Esophagus muscularis mucosa (tissue), 4 donors: ENCODE measurements at regions of chr18 and their contacts with region 1.

Region 1: GRCh38 chr18:52888014-52888413 is 548.0 kb downstream of the DCC start:
- DNase-seq: no peak
- H3K4me3 ChIP-seq: no peak overlapping the region
- H3K27ac ChIP-seq: no peak overlapping the region
- H3K4me1 ChIP-seq: no peaks in the 10 kb centered on the region
- H3K27me3 ChIP-seq: no peaks in the 10 kb centered on the region
- CTCF ChIP-seq: no peak
- EP300 ChIP-seq: no peak
- POLR2A ChIP-seq: no peak

Region 2: GRCh38 chr18:52615943-52616342 is 272.1 kb before region 1 on chr18:
- intact Hi-C with region 1: no loop called
- DNase-seq: no peak
- H3K4me3 ChIP-seq: no peak overlapping the region
- H3K27ac ChIP-seq: no peak overlapping the region
- H3K4me1 ChIP-seq: no peaks in the 10 kb centered on the region
- H3K27me3 ChIP-seq: no peaks in the 10 kb centered on the region
- CTCF ChIP-seq: no peak
- EP300 ChIP-seq: no peak
- POLR2A ChIP-seq: no peak

Region 3: GRCh38 chr18:52829876-52830405 is 58.1 kb before region 1 on chr18:
- intact Hi-C with region 1: loop called (anchors 5 kb)
- DNase-seq: no peak
- H3K4me3 ChIP-seq: no peak overlapping the region
- H3K27ac ChIP-seq: no peak overlapping the region
- H3K4me1 ChIP-seq: peaks cover 0 to 8% (median 1%) of the 10 kb centered on the region in 4 donors
- H3K27me3 ChIP-seq: no peaks in the 10 kb centered on the region
- CTCF ChIP-seq: no peak
- EP300 ChIP-seq: no peak
- POLR2A ChIP-seq: no peak

Region 4: DNA sequence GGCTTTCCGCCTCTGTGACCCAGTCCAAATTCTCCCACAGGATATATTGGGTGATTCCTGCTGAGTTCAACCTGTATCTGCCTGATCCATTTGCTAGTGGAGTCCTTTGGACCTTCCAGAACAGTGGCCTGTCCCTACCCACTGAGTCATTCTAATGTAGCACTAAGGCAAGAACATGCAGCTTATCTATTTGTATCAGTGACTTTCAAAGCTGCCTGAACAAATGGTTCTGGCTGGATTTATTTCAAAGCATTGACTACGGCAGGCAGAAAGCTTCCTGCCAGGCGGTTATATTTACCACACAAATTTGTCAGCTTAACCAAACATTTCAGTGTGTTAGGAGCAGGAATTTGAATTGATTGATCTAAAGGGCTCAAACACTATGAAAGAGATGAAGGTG is 65.4 kb after region 1 on chr18:
- intact Hi-C with region 1: no loop called
- DNase-seq: no peak
- H3K4me3 ChIP-seq: no peak overlapping the region
- H3K27ac ChIP-seq: no peak overlapping the region
- H3K4me1 ChIP-seq: no peaks in the 10 kb centered on the region
- H3K27me3 ChIP-seq: no peaks in the 10 kb centered on the region
- CTCF ChIP-seq: no peak
- EP300 ChIP-seq: no peak
- POLR2A ChIP-seq: no peak

Region 5: GRCh38 chr18:52970686-52971085 is 82.7 kb after region 1 on chr18:
- intact Hi-C with region 1: no loop called
- DNase-seq: no peak
- H3K4me3 ChIP-seq: no peak overlapping the region
- H3K27ac ChIP-seq: no peak overlapping the region
- H3K4me1 ChIP-seq: no peaks in the 10 kb centered on the region
- H3K27me3 ChIP-seq: no peaks in the 10 kb centered on the region
- CTCF ChIP-seq: no peak
- EP300 ChIP-seq: no peak
- POLR2A ChIP-seq: no peak